Activated CD4-positive, alpha-beta T cell treated with anti-CD3 and anti-CD28 coated beads for 36 hours (primary cell): ENCODE measurements at regions of chr10 and their contacts with region 1.

Region 1: DNA sequence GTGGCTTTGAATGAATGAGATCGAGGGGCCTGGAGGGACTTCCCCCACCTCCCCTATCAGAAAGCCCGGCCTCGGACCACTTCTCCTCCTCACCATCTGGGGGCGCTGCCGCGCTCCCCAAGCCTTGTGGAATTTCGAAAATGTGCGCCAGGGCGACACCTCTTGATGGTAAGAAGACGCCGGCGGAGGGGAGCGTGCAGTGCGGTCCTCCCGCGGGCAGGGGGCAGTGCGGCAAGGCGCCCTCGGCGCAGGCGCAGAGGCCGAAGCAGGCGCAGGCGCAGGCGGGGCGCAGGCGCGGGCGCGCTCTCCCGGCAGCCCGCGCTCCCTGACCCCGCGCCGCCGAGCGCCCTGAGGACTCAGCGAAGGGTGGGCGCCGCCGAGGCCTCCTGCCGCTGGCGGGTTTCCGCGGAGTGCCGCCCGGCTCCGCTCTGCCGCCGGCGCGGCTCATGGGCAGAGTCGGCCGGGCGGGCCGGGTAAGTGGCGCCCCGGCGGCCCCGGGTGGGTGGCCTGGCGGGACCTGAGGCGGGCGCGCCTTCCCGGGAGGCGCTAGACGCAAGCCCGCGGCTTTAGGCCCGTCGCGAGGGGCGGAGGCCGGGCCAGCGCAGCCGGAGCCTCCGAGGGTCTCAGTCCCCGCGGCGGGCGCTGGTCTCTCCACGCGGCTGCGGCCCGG is at the start of gene RBM17:
- DNase-seq: peak; percentile 98
- ATAC-seq: peak; percentile 70
- H3K4me3 Mint-ChIP-seq: peak within 1 kb of the TSS; percentile 90
- H3K27ac Mint-ChIP-seq: peak within 1 kb of the TSS; percentile 78
- H3K4me1 Mint-ChIP-seq: peaks cover 73% of the 10 kb centered on the region
- H3K27me3 Mint-ChIP-seq: no peaks in the 10 kb centered on the region
- total RNA-seq, gene RBM17: 206 to 246 TPM

Region 2: DNA sequence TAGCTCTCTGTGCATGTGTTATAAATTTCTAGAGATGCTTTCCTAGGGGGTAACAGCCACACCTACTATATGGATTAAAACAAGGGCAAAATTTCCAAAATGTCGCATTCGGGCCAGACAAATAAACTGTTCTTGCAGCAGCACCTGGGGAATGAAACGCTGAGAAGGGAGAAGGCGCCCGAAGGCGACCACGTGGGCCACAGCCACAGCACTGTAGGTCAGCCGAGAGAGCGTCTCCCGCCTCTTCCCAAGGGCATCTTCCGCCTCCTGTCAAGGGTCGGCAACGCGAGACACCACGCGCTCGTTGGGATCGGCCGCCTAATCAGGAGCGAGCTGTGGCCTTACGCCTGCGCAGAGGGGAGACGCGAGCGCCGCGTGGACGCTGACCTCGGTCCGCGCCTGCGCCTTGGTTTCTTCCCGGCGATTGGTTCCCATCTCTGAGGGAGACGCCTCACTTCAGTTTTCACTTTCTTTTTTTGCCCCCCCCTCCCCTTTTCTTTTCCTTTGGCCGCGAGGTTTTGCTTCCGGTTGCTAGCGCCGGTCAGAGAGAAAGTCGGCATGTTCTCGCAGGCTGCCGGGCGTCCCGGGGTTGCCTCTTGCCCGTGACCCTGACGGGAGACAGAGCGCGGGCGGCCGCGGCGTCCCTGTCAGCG is 404.4 kb before region 1 on chr10 and contains the start of gene TASOR2:
- CTCF ChIA-PET with region 1: interaction called, 3 read pairs
- POLR2A ChIA-PET with region 1: no interaction called
- intact Hi-C with region 1: loop called in 1 of 2 experiments (anchors 2 kb)
- DNase-seq: peak; percentile 98
- ATAC-seq: peak; percentile 91
- H3K4me3 Mint-ChIP-seq: peak within 1 kb of the TSS; percentile 96
- H3K27ac Mint-ChIP-seq: peak within 1 kb of the TSS; percentile 92
- H3K4me1 Mint-ChIP-seq: peaks cover 56% of the 10 kb centered on the region
- H3K27me3 Mint-ChIP-seq: no peaks in the 10 kb centered on the region
- total RNA-seq, gene TASOR2: 41.9 to 45.4 TPM

Region 3: GRCh38 chr10:5889624-5890451 is 199.0 kb before region 1 on chr10 and contains the starts of genes ANKRD16 and FBH1:
- CTCF ChIA-PET with region 1: interaction called, 4 read pairs
- POLR2A ChIA-PET with region 1: interaction called, 3 read pairs
- intact Hi-C with region 1: loop called in 1 of 2 experiments (anchors 1 kb)
- DNase-seq: peak; percentile 99
- ATAC-seq: peak; percentile 87
- H3K4me3 Mint-ChIP-seq: peak within 1 kb of the TSS; percentile 90
- H3K27ac Mint-ChIP-seq: peak within 1 kb of the TSS; percentile 84
- H3K4me1 Mint-ChIP-seq: peaks cover 53% of the 10 kb centered on the region
- H3K27me3 Mint-ChIP-seq: no peaks in the 10 kb centered on the region
- total RNA-seq, gene ANKRD16: 7.5 to 8.3 TPM
- total RNA-seq, gene FBH1: 53.3 to 56.2 TPM

Region 4: DNA sequence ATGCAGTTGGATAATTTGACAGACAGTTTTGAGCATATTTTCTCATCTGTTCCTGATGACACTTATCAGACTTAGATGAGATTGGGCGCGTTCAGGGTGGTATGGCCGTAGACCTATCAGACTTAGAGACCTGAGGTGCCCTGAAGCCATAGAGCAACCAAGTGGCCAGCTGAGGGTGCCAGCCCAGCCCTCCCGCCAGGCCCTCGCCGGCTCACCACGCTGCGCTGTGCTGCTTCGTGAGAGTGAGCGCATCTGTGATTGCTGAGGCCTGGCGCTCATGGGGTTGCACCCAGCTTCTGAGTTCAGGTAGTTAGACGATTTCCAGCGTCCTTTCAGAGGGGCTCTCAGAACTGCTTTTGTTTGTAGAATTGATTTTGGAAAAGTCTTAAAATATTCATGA is 188.6 kb before region 1 on chr10:
- CTCF ChIA-PET with region 1: no interaction called
- POLR2A ChIA-PET with region 1: no interaction called
- intact Hi-C with region 1: no loop called
- DNase-seq: no peak
- ATAC-seq: no peak
- H3K4me3 Mint-ChIP-seq: no peak overlapping the region
- H3K27ac Mint-ChIP-seq: no peak overlapping the region
- H3K4me1 Mint-ChIP-seq: peaks cover 23% of the 10 kb centered on the region
- H3K27me3 Mint-ChIP-seq: no peaks in the 10 kb centered on the region

Region 5: DNA sequence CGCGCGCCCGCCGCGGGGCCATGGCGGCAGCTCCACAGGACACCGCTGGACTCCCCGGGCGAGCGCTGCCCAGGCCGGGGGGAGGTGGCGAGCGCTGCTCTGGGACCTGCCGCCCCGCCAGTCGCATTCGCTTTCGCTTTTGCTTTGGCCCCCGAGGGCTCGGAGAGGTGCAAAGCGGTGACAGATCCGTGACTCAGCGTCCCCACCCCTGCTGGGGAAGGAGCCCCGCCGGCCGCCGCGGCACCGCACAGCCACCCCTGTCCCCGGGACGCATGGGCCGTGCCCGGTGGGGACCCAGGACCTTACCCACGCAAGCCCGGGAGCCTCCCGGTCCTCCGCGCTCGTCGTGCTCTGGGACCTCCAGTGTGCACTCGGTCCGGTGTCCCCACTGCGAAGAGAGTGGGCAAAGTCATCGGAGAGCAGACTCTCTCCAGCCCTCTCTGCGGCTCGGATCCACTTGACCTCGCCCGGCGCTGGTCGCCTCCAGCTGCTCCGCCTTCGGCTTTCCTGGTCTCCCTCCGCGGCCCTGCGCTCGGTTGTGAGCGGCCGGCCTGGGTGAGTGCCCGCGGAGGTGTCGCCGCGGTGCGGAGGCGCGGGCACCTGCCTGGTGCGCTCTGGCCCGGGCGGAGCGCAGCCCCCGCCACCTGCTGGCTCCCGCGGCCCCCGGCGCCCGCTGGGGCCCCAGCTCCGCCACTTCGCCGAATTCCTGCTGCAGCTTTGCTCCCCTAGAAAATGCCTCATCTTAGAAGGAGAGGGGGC is 111.2 kb before region 1 on chr10 and contains the start of gene IL15RA:
- CTCF ChIA-PET with region 1: interaction called, 8 read pairs
- POLR2A ChIA-PET with region 1: no interaction called
- intact Hi-C with region 1: loop called in 1 of 2 experiments (anchors 1 kb)
- DNase-seq: peak; percentile 95
- ATAC-seq: peak; percentile 72
- H3K4me3 Mint-ChIP-seq: peak within 1 kb of the TSS; percentile 94
- H3K27ac Mint-ChIP-seq: peak within 1 kb of the TSS; percentile 95
- H3K4me1 Mint-ChIP-seq: peaks cover 28% of the 10 kb centered on the region
- H3K27me3 Mint-ChIP-seq: no peaks in the 10 kb centered on the region
- total RNA-seq, gene IL15RA: 19.7 to 22.1 TPM

Region 6: DNA sequence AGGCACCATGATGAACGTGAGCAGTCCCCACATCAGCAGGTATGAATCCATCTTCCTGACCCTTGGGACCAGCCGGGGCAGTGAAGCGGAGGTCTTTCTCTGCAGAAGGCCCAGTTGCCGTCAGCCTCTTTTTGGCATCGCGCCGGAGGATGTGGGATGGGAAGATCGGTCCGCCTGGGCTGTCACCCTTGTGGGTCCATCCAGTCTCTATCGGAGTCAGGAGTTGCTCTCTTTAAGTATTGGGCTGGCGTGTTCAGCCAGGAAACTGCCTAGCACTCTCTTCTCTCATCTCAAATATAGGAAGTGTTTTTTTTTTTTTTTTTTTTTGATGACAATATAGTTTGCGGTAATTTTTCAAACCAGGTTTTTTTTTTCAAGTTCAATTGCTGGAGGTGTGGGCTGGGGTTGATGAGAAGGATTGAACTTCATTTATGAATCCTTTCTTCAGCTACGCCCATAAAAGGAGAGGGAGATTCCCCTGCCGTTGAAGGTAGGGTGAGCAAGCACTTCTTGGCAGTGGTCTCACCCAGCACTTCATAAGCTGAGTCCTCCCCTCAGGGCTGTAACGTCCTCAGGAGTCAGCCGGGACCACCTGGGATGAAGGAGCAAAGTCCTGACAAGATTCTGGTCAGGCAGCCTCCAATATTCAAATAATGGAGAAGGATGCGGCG is 26.6 kb before region 1 on chr10 and contains the start of gene IL2RA:
- CTCF ChIA-PET with region 1: interaction called, 113 read pairs
- POLR2A ChIA-PET with region 1: interaction called, 33 read pairs
- intact Hi-C with region 1: loop called in 1 of 2 experiments (anchors 1 kb)
- DNase-seq: peak; percentile 87
- ATAC-seq: peak; percentile 79
- H3K4me3 Mint-ChIP-seq: peak within 1 kb of the TSS; percentile 91
- H3K27ac Mint-ChIP-seq: peak within 1 kb of the TSS; percentile 93
- H3K4me1 Mint-ChIP-seq: peaks cover 53% of the 10 kb centered on the region
- H3K27me3 Mint-ChIP-seq: peaks cover 3% of the 10 kb centered on the region
- total RNA-seq, gene IL2RA: 659 to 980 TPM

Region 7: DNA sequence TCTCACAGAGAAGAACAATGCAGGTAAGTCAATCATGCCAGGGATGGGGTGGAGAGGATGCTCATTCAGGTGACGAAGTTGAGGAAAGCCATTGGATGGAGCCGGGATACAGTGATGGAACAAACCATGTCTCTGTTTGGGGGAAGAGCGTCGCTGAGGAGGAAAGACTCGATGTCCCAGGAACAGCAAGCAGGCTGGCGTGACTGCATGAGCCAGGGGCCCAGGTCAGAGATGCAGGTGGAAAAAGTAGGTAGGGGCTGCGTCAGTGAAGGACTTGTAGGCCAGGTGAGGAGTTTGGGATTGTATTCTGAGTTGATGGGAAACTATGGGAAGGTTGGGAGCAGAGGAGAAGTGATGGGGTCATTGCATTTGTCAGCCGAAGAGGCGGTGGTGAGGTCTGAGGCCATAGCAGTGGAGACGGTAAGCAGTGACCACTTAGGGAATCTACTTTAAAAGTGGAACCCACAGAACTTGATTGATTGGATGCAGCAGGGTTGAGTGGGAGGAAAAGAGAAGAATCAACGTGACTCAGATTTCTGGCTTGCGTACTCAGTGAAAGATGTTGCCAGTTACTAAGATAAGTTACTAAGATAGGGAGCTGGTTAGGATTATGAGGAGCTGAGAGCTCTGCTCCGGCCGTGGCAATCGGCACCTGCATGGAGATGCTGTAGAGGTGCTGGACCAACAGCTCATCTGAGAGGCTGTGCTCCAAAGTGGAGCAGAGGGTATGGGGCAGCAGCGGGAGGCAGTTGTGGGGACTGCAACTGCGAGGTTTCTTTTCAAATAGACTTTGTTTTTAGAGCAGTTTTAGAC is 14.2 kb before region 1 on chr10:
- CTCF ChIA-PET with region 1: interaction called, 60 read pairs
- POLR2A ChIA-PET with region 1: interaction called, 25 read pairs
- intact Hi-C with region 1: no loop called
- DNase-seq: peak; percentile 54
- ATAC-seq: peak; percentile 57
- H3K4me3 Mint-ChIP-seq: peak overlapping the region; percentile 26
- H3K27ac Mint-ChIP-seq: peak overlapping the region; percentile 58
- H3K4me1 Mint-ChIP-seq: peaks cover 61% of the 10 kb centered on the region
- H3K27me3 Mint-ChIP-seq: peaks cover 8% of the 10 kb centered on the region

Region 8: GRCh38 chr10:6163364-6164270 is 74.8 kb after region 1 on chr10:
- CTCF ChIA-PET with region 1: interaction called, 7 read pairs
- POLR2A ChIA-PET with region 1: no interaction called
- intact Hi-C with region 1: loop called in 1 of 2 experiments (anchors 1 kb)
- DNase-seq: peak; percentile 94
- ATAC-seq: peak; percentile 92
- H3K4me3 Mint-ChIP-seq: peak overlapping the region; percentile 92
- H3K27ac Mint-ChIP-seq: peak overlapping the region; percentile 95
- H3K4me1 Mint-ChIP-seq: peaks cover 67% of the 10 kb centered on the region
- H3K27me3 Mint-ChIP-seq: no peaks in the 10 kb centered on the region